CD8-positive, alpha-beta T cell (primary cell): ENCODE measurements at regions of chr6 and their contacts with region 1.

Region 1: DNA sequence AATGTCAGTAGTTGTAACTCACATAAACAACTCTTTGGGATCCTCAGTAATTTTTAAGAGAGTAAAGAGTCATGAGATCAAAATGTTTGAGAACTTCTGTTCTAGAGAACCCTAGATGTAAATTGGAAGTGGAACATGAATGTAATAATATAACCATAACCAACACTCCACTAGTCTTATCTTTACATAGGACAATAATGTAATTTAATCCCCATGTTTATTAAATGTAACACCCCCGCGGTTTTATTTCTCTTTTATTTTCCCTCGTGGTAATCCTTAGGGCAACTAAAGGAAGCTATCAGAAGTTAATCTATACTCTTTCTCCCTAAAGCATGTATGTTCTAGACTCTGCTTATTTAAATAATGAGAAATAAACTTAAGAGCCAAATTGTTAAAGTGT is 54.4 kb downstream of the ZNF292 start:
- DNase-seq: no peak
- ATAC-seq: no peak
- H3K4me3 ChIP-seq: no peak overlapping the region
- H3K4me3 Mint-ChIP-seq: no peak overlapping the region
- H3K27ac ChIP-seq: no peak overlapping the region
- H3K27ac Mint-ChIP-seq: no peak overlapping the region
- H3K4me1 ChIP-seq: peaks cover 21% of the 10 kb centered on the region
- H3K4me1 Mint-ChIP-seq: peaks cover 88% of the 10 kb centered on the region
- H3K27me3 ChIP-seq: no peaks in the 10 kb centered on the region
- H3K27me3 Mint-ChIP-seq: no peaks in the 10 kb centered on the region
- CTCF ChIP-seq: no peak

Region 2: DNA sequence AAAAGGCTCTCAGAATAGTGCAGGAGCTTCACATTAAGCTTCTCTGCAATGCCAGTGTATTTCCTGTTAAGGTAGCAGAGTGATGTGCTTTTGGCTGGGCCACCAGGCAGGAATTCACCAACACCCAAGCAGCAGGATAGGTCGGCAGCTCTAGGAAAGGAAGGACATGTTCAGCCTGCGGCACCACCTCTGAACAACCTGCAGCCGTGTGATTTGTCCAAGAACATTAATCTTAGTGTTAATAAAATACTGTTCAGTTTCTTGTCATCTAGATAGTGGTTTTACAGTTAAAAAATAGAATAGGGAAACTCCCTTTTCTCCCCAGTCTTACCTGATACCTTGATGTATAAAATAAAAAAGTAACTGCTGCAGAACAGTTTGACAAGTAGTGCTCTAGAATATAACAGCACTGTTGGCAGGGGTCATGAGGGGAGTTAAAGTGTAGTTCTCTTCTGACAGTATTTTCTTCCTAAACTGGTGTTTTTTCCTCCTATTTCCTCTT is 35.7 kb before region 1 on chr6:
- CTCF ChIA-PET with region 1: no interaction called
- POLR2A ChIA-PET with region 1: no interaction called
- intact Hi-C with region 1: loop called in 1 of 2 experiments (anchors 5 kb)
- DNase-seq: peak in 1 of 9 experiments; percentile 19
- ATAC-seq: peak; percentile 17
- H3K4me3 ChIP-seq: no peak overlapping the region
- H3K4me3 Mint-ChIP-seq: no peak overlapping the region
- H3K27ac ChIP-seq: peak overlapping the region in 1 of 2 experiments; percentile 10
- H3K27ac Mint-ChIP-seq: peak overlapping the region; percentile 4
- H3K4me1 ChIP-seq: peaks cover 40% of the 10 kb centered on the region
- H3K4me1 Mint-ChIP-seq: peaks cover 86% of the 10 kb centered on the region
- H3K27me3 ChIP-seq: no peaks in the 10 kb centered on the region
- H3K27me3 Mint-ChIP-seq: no peaks in the 10 kb centered on the region
- CTCF ChIP-seq: no peak

Region 3: GRCh38 chr6:87197547-87197946 is 12.3 kb before region 1 on chr6:
- CTCF ChIA-PET with region 1: no interaction called
- POLR2A ChIA-PET with region 1: interaction called, 3 read pairs
- intact Hi-C with region 1: loop called in 1 of 2 experiments (anchors 2 kb)
- DNase-seq: no peak
- ATAC-seq: no peak
- H3K4me3 ChIP-seq: no peak overlapping the region
- H3K4me3 Mint-ChIP-seq: no peak overlapping the region
- H3K27ac ChIP-seq: no peak overlapping the region
- H3K27ac Mint-ChIP-seq: no peak overlapping the region
- H3K4me1 ChIP-seq: peaks cover 12% of the 10 kb centered on the region
- H3K4me1 Mint-ChIP-seq: peaks cover 74% of the 10 kb centered on the region
- H3K27me3 ChIP-seq: no peaks in the 10 kb centered on the region
- H3K27me3 Mint-ChIP-seq: no peaks in the 10 kb centered on the region
- CTCF ChIP-seq: no peak